GM12878 (cell line): ENCODE measurements at regions of chr6 and their contacts with region 1.

Region 1: DNA sequence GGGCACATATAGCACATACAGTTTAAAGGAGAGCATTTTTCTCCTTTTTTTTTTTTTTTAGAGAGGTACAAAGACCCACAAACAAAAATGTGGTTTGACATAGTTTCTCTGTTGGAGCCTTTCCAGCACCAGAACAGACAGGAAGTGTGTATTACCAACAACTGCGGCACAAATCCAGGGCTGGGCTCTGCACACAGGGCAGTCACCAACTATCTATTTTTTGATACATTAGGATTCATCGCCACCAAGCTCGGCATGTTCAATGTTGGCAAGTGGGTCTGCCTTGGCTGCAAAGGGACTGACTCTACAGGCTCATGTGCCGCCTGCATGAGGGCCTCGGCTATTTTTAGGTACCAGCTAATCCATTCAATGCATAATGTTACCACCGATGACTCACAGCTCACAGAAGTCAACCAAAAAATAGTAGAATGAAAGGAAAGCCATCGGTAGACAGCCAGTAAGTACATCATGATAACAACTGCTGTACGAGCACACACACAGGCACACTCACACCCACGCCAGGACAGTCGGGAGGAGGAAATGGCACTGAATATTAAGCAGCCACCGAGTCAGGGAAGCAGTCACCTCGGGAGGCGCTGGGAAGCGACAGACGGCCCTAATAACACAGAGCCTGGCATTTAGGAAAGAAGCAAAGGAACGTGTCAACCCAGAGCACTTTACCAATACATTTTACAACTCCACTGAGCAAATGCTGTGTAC is 81.6 kb downstream of the GMPR start:
- DNase-seq: peak; percentile 59
- ATAC-seq: peak; percentile 90
- H3K4me3 ChIP-seq: peak overlapping the region; percentile 43
- H3K27ac ChIP-seq: peak overlapping the region; percentile 56
- H3K4me1 ChIP-seq: peaks cover 31% of the 10 kb centered on the region
- H3K27me3 ChIP-seq: no peaks in the 10 kb centered on the region
- CTCF ChIP-seq: no peak
- EP300 ChIP-seq: 0 out of 4 replicates have a peak, but pooled peaks of 1 of the 2 experiments have one; percentile 9
- POLR2A ChIP-seq: 0 out of 2 replicates have a peak, but pooled peaks have one; percentile 26
- RAD21 ChIP-seq: no peak

Region 2: GRCh38 chr6:15327271-15327670 is 992.7 kb before region 1 on chr6:
- CTCF ChIA-PET with region 1: no interaction called
- POLR2A ChIA-PET with region 1: no interaction called
- RAD21 ChIA-PET with region 1: no interaction called
- SMC1A ChIA-PET with region 1: no interaction called
- in situ Hi-C with region 1: no loop called
- intact Hi-C with region 1: no loop called
- DNase-seq: no peak
- ATAC-seq: peak; percentile 66
- H3K4me3 ChIP-seq: no peak overlapping the region; the same call in 1 of the 2 replicates
- H3K27ac ChIP-seq: peak overlapping the region; percentile 72
- H3K4me1 ChIP-seq: peaks cover 69% of the 10 kb centered on the region
- H3K27me3 ChIP-seq: no peaks in the 10 kb centered on the region
- CTCF ChIP-seq: peak; percentile 57 to 62 (median 60)
- EP300 ChIP-seq: no peak
- POLR2A ChIP-seq: no peak
- RAD21 ChIP-seq: peak; percentile 64

Region 3: DNA sequence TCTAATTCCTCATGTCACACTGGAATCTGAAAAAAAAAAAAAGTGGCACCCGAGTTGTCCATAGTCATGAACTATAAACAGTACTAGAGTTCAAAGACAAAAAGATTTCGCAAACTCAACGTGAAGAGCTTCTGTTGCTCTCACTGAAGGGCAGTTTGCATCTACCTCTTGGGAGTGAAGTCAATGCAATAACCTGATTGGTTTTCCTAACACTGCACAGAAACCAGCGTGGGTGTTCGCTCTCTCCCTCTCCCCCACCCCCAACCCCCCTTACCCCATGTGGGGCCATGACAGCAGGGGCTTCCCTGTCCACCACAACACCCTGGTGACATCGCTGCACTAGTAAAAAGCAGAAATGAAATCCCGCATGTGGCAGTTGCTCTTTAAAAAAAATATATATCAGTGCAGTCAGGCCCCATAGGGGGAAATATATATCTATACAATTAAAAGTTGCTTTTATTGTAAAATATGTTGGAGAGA is 14.7 kb before region 1 on chr6:
- CTCF ChIA-PET with region 1: interaction called, 16 read pairs
- POLR2A ChIA-PET with region 1: interaction called, 5 read pairs
- RAD21 ChIA-PET with region 1: interaction called, 6 read pairs
- SMC1A ChIA-PET with region 1: interaction called, 16 read pairs
- in situ Hi-C with region 1: no loop called
- intact Hi-C with region 1: no loop called
- DNase-seq: peak; percentile 83
- ATAC-seq: peak; percentile 90
- H3K4me3 ChIP-seq: peak overlapping the region; percentile 53; the same call in 1 of the 2 replicates
- H3K27ac ChIP-seq: peak overlapping the region; percentile 75
- H3K4me1 ChIP-seq: peaks cover 32% of the 10 kb centered on the region
- H3K27me3 ChIP-seq: no peaks in the 10 kb centered on the region
- CTCF ChIP-seq: no peak
- EP300 ChIP-seq: peak; percentile 83 to 88
- POLR2A ChIP-seq: no peak
- RAD21 ChIP-seq: no peak

Region 4: DNA sequence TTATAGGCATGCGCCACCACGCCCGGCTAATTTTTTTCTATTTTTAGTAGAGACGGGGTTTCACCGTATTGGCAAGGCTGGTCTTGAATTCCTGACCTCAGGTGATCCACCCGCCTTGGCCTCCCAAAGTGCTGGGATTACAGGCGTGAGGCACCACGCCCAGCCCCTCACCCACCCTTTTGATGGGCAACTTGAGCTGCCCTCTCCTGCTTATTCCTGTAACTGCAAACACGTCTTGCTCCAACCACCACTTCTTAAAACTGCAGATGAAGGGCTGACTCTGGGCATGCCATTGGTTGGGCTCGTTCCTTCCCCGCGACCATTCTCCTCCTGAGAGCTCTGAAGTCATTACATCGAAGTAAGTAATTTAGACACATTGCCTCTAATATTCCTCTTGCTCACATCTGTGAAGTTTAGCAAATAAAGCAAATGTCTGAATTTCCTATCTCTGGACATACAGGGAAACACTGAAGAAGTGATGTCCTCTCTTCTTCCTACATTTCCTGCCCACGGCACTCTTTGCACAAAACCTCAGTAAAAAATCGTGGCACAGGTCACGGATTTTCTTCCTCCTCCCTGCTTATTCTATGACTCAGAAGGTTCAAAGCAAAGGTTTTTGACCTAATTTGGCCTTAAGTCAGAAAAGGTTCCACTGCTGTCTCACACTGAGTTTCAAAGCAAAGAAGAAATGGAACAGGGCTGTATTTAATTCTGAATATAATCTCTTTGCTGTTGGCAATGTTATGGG is 35.9 kb after region 1 on chr6:
- CTCF ChIA-PET with region 1: no interaction called
- POLR2A ChIA-PET with region 1: no interaction called
- RAD21 ChIA-PET with region 1: no interaction called
- SMC1A ChIA-PET with region 1: no interaction called
- in situ Hi-C with region 1: no loop called
- intact Hi-C with region 1: no loop called
- DNase-seq: no peak
- ATAC-seq: no peak
- H3K4me3 ChIP-seq: no peak overlapping the region
- H3K27ac ChIP-seq: no peak overlapping the region
- H3K4me1 ChIP-seq: no peaks in the 10 kb centered on the region
- H3K27me3 ChIP-seq: no peaks in the 10 kb centered on the region
- CTCF ChIP-seq: no peak
- EP300 ChIP-seq: no peak
- POLR2A ChIP-seq: no peak
- RAD21 ChIP-seq: no peak

Region 5: DNA sequence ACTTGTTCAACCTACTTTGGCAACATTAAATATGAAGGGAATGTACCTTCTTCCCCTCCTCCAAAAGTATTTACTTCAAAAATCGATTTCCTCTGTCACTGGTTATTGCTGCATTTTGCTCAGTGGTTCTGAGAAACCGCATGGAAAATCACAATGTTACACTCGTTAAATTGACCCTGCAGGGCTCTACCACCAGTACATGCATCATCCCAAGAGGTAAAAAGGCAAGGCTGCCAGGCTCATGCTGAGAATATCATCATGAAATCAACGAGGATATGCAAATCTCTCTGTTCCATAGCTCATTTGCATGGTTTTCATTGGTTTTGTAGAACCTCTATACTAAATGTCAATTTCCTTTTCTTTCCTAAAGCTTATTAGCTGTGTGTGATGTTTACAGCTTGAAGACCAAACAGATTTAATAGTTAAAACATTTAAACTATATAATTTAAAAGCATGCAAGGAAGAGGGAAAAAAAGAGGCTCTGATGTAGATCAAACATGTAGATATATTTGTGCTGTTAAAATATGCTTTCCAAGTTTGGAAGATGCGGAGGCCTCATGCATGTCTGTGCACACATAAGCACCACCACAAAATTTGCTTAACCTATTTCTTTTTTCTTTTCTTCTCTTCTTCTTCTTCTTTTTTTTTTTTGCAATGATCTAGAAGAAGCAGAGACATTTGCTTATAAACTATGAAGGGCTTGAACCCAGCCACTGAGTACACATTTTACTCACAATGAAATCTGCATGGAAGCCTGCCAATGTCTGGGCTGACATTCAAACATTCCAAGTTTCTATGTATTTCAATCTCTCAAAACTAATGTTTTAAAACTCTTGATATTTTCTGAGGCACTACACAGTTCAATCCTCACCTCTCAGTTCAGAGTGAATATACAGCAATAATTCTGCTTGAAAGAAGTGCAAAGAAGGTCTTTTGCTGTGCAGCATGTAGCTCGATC is 112.4 kb after region 1 on chr6:
- CTCF ChIA-PET with region 1: no interaction called
- POLR2A ChIA-PET with region 1: interaction called, 11 read pairs
- RAD21 ChIA-PET with region 1: no interaction called
- SMC1A ChIA-PET with region 1: no interaction called
- in situ Hi-C with region 1: no loop called
- intact Hi-C with region 1: no loop called
- DNase-seq: peak; percentile 77
- ATAC-seq: peak; percentile 78
- H3K4me3 ChIP-seq: peak overlapping the region; percentile 14; the same call in 1 of the 2 replicates
- H3K27ac ChIP-seq: peak overlapping the region; percentile 39
- H3K4me1 ChIP-seq: peaks cover 45% of the 10 kb centered on the region
- H3K27me3 ChIP-seq: no peaks in the 10 kb centered on the region
- CTCF ChIP-seq: no peak
- EP300 ChIP-seq: 0 out of 4 replicates have a peak, but pooled peaks of 1 of the 2 experiments have one; percentile 7
- POLR2A ChIP-seq: no peak
- RAD21 ChIP-seq: 0 out of 2 replicates have a peak, but pooled peaks have one; percentile 1